Breast epithelium (tissue), 4 donors: ENCODE measurements at regions of chr15 and their contacts with region 1.

Region 1: DNA sequence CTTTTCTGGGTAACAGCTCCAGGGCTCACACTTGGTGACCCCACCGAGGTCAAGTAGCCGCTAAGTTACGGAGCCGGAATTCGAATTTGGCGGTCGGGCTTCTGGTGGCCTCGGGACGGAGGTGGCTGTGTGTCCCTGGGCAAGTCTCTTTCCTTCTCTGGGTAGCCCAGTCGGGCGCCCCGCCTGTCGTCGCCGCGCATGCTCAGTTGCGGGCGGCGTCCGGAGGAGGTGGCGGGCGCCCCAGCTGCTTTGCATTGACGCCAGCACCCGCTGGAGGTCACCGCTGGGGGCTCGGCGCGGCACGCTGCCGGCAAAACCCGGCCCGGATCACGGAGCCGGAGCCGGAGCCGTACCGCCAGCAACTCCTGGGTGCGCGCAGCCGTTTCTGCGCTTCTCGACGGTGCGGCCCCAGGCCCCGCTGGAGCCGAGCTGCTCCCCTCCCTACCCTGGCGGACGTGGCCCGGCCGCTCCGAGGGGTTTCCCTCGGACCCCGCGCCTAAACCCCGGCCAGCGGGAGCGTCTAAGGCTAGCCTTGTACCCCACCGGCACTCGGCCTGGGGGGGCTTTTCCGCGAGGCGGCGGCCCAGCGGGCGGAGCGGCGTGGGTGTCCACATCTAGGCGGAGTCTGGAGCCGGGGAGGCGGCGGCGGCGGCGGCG is 474 bp upstream of the PDE8A start:
- DNase-seq: peak; percentile 89
- H3K4me3 ChIP-seq: peak overlapping the region; percentile 79 to 92 (median 90)
- H3K27ac ChIP-seq: peak overlapping the region; percentile 88 to 93
- H3K4me1 ChIP-seq: no peaks in the 10 kb centered on the region
- H3K27me3 ChIP-seq: no peaks in the 10 kb centered on the region
- CTCF ChIP-seq: peak; percentile 52
- POLR2A ChIP-seq: no peak

Region 2: GRCh38 chr15:85702321-85703101 is 721.3 kb after region 1 on chr15:
- intact Hi-C with region 1: loop called (anchors 5 kb)
- DNase-seq: no peak
- H3K4me3 ChIP-seq: no peak overlapping the region
- H3K27ac ChIP-seq: peak overlapping the region; percentile 46 to 61
- H3K4me1 ChIP-seq: peaks cover 0 to 6% of the 10 kb centered on the region in 2 donors
- H3K27me3 ChIP-seq: no peaks in the 10 kb centered on the region
- CTCF ChIP-seq: no peak
- POLR2A ChIP-seq: no peak